ENCODE measurements at regions of chr16 and their contacts with region 1.

Region 1: DNA sequence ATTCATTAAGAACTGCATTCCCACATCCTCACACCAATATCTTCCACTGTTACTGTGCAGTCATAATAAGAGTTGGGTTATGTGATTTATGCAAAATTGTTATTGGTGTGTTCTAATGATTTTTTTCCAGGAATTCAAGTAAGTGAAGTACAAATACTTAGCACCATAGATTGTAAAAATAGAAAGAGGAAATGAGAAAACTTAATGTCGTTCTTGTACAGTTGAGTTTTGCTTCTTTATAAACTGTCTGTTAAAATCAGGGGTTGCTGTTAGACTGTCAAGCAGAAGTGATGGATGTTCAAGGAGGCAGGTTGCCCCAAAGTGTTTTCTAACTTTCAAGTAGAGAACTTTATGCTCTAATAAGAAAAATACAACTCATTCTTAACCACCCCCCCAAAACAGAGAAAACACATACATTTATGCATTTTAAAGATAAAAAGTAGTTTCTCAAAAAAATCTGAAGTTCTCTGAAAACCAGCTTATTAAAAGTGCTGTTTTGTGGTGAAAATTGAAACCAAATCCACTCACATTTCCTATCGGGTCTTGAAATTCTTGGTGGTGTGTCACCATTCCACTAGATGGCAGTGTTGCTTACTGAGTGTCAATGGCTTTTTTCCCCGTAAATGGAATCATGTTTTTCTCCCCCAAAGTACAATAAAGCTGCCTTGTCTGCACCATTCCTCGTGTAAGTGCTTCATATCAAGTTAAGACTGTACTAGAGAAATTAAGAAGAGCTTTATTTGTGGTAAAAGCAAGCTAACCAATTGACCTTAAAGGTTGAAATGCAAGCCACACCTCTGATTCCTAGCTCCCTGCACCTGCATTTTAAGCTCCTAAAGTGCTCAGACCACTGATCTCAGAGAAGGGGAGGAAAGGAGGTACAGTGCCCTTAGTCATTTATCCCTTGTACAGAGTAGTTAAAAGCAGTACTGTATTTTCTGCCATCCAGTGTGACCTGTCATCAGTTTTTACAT is 4.7 kb upstream of the IGSF6 start:
- DNase-seq: peak; percentile 43
- ATAC-seq: no peak
- H3K4me3 Mint-ChIP-seq: no peak overlapping the region
- H3K27ac Mint-ChIP-seq: peak overlapping the region; percentile 69
- H3K4me1 Mint-ChIP-seq: peaks cover 48% of the 10 kb centered on the region
- H3K27me3 Mint-ChIP-seq: no peaks in the 10 kb centered on the region
- CTCF ChIP-seq: peak; percentile 94

Region 2: DNA sequence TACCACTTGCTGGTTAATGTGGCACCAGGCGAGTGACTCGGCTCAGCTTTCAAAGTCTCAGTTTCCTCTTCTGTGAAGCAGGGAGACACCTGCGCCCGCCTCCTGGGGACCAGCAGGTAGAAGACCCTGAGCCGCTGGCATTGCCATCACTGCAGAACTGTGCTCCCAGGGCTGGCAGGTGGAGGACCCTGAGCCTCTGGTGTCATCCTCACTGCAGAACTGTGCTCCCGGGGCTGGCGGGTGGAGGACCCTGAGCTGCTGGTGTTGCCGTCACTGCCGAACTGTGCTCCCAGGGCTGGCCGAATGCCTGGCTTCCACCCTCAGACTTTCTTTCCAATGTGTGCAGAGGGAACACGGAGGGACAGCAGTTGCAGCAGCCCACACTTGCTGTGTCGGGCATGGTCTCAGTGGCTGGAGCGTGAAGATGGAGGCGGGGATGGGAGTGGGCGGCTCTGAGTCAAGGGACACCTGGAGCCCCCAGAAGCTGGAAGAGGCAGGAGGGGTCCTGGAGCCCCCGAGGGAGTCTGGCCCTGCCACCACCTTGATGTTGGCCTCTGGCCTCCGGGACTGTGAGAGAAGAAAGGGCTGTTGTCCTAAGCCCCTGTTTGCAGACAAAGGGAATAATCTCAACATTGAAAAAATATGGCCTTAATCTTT is 133.5 kb before region 1 on chr16:
- CTCF ChIA-PET with region 1: no interaction called
- POLR2A ChIA-PET with region 1: no interaction called
- intact Hi-C with region 1: no loop called
- DNase-seq: no peak
- ATAC-seq: no peak
- H3K4me3 Mint-ChIP-seq: no peak overlapping the region
- H3K27ac Mint-ChIP-seq: no peak overlapping the region
- H3K4me1 Mint-ChIP-seq: no peaks in the 10 kb centered on the region
- H3K27me3 Mint-ChIP-seq: peaks cover 2% of the 10 kb centered on the region
- CTCF ChIP-seq: no peak

Region 3: DNA sequence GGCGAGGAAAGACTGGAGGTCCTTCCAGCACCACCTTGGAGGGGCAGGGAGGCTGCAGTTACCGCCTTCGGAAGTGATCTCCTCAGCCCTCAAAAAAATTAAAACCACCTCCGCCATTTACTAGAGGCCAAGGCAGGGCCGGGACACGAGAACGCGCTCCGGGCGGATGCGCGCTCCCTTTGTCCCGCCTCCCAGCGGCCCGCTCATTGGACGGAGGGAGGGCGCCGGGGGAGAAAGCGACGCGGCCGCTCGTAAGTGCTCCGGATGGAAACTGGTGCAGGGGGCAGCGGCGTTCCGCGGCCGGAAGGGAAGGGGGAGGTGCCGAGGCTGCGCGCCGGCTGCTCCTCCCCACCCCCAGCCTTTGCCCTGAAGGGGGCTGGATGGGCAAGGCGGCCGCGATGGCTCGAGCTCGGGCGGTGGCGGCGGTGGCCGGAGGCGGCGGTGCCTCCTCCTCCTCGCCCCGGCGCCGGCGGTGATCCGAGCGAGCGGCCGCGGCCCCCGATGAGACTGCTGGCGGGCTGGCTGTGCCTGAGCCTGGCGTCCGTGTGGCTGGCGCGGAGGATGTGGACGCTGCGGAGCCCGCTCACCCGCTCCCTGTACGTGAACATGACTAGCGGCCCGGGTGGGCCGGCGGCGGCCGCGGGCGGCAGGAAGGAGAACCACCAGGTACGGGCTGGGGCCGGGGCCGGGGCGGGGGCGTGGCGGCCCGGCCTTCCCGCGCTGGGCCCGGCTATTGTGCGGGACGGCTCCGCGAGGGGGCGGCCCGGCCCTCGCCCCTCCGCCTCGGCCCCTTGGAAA is 57.6 kb before region 1 on chr16 and contains the start of gene METTL9:
- CTCF ChIA-PET with region 1: interaction called, 28 read pairs
- POLR2A ChIA-PET with region 1: no interaction called
- intact Hi-C with region 1: no loop called
- DNase-seq: peak; percentile 95
- ATAC-seq: peak; percentile 94
- H3K4me3 Mint-ChIP-seq: peak within 1 kb of the TSS; percentile 98
- H3K27ac Mint-ChIP-seq: peak within 1 kb of the TSS; percentile 88
- H3K4me1 Mint-ChIP-seq: peaks cover 54% of the 10 kb centered on the region
- H3K27me3 Mint-ChIP-seq: no peaks in the 10 kb centered on the region
- CTCF ChIP-seq: no peak
- total RNA-seq, gene METTL9: 116 to 122 TPM

Region 4: GRCh38 chr16:21646721-21647561 is 10.1 kb before region 1 on chr16:
- CTCF ChIA-PET with region 1: interaction called, 33 read pairs
- POLR2A ChIA-PET with region 1: interaction called, 4 read pairs
- intact Hi-C with region 1: no loop called
- DNase-seq: peak; percentile 93
- ATAC-seq: peak; percentile 91
- H3K4me3 Mint-ChIP-seq: peak overlapping the region; percentile 61
- H3K27ac Mint-ChIP-seq: peak overlapping the region; percentile 93
- H3K4me1 Mint-ChIP-seq: peaks cover 52% of the 10 kb centered on the region
- H3K27me3 Mint-ChIP-seq: no peaks in the 10 kb centered on the region
- CTCF ChIP-seq: no peak

Region 5: DNA sequence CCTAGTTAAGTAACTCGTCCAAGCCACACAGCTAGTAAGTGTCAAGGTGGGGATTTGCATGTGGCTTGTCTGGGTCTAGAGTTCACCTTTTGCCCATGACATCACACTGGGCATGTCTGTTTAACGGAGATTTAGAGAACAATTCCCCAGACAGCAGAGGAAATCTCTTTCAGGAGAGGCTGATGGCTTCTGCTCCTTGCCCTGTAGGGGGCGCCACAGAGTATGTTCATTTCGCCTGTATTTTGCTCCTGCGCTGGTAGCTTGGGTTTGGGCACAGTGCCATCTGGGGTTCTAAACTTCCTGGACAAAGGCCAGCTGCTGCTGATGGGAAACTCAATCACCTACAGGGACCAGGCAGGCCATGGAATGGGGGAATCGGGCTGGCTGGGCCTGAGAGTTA is 27.1 kb after region 1 on chr16:
- CTCF ChIA-PET with region 1: interaction called, 21 read pairs
- POLR2A ChIA-PET with region 1: no interaction called
- intact Hi-C with region 1: no loop called
- DNase-seq: peak; percentile 56
- ATAC-seq: no peak
- H3K4me3 Mint-ChIP-seq: no peak overlapping the region
- H3K27ac Mint-ChIP-seq: no peak overlapping the region
- H3K4me1 Mint-ChIP-seq: no peaks in the 10 kb centered on the region
- H3K27me3 Mint-ChIP-seq: peaks cover under 1% of the 10 kb centered on the region
- CTCF ChIP-seq: peak; percentile 84

Region 6: GRCh38 chr16:21708533-21709115 is 51.5 kb after region 1 on chr16:
- CTCF ChIA-PET with region 1: interaction called, 133 read pairs
- POLR2A ChIA-PET with region 1: interaction called, 4 read pairs
- intact Hi-C with region 1: loop called (anchors 5 kb)
- DNase-seq: peak; percentile 94
- ATAC-seq: peak; percentile 45
- H3K4me3 Mint-ChIP-seq: no peak overlapping the region
- H3K27ac Mint-ChIP-seq: no peak overlapping the region
- H3K4me1 Mint-ChIP-seq: peaks cover 2% of the 10 kb centered on the region
- H3K27me3 Mint-ChIP-seq: no peaks in the 10 kb centered on the region
- CTCF ChIP-seq: peak; percentile 88